ENCODE measurements at regions of chr5 and their contacts with region 1.

Region 1: DNA sequence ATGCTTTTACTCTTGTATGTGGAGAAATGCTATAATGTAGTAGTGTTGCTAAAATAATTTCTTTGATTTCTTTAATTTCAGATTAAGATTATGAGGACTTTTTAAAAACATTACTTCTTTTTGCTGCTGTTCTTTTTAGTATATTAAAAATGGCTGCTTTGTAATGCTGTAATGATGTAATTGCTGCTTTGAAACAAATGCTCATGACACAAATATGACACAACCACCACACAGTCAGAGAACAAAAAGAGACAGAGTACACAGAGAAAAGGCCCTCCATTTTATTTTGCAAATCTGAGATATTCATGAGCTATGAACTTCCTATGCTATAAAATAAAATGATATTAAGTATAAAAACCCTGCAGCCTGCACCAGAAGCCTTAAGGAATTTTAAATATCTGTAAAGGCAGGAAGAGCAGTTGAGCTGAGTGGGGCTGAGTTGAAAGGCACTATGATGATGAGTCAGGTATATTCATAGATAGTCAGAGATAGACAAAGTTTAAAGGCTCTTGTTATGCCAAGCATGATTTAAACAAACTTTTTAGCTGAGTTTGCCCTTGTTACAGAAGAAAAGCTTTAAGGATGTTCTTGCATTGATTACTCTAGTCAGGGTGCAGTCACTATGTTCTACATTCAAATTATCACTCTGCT is 5.1 kb upstream of the POU5F2 start:
- DNase-seq: no peak
- H3K4me3 ChIP-seq: no peak overlapping the region
- H3K27me3 ChIP-seq: no peaks in the 10 kb centered on the region
- CTCF ChIP-seq: no peak

Region 2: GRCh38 chr5:93623153-93623552 is 123.4 kb before region 1 on chr5:
- CTCF ChIA-PET with region 1: no interaction called
- POLR2A ChIA-PET with region 1: interaction called, 10 read pairs
- DNase-seq: no peak
- H3K4me3 ChIP-seq: no peak overlapping the region
- H3K27me3 ChIP-seq: no peaks in the 10 kb centered on the region
- CTCF ChIP-seq: no peak